Spleen (tissue), 13 donors: ENCODE measurements at regions of chr21 and their contacts with region 1.

Region 1: GRCh38 chr21:26715878-26716506 is 129.2 kb downstream of the ADAMTS1 start:
- DNase-seq: no peak
- H3K4me3 ChIP-seq: no peak overlapping the region
- H3K27ac ChIP-seq: no peak overlapping the region
- H3K4me1 ChIP-seq: peaks cover 0 to 14% (median 2%) of the 10 kb centered on the region in 6 donors
- H3K27me3 ChIP-seq: peaks cover 0 to 9% (median 0%) of the 10 kb centered on the region in 7 donors
- CTCF ChIP-seq: peak in 10 of 11 experiments; percentile 14 to 70 (median 50)
- POLR2A ChIP-seq: no peak

Region 2: GRCh38 chr21:25881525-25882376 is 834.2 kb before region 1 on chr21:
- intact Hi-C with region 1: loop called (anchors 5 kb)
- DNase-seq: peak; percentile 88
- H3K4me3 ChIP-seq: no peak overlapping the region
- H3K27ac ChIP-seq: no peak overlapping the region
- H3K4me1 ChIP-seq: no peaks in the 10 kb centered on the region
- H3K27me3 ChIP-seq: no peaks in the 10 kb centered on the region
- CTCF ChIP-seq: peak; percentile 66 to 91 (median 87)
- POLR2A ChIP-seq: no peak

Region 3: GRCh38 chr21:26769613-26770188 is 53.7 kb after region 1 on chr21:
- intact Hi-C with region 1: no loop called
- DNase-seq: no peak
- H3K4me3 ChIP-seq: no peak overlapping the region
- H3K27ac ChIP-seq: no peak overlapping the region
- H3K4me1 ChIP-seq: no peaks in the 10 kb centered on the region
- H3K27me3 ChIP-seq: no peaks in the 10 kb centered on the region
- CTCF ChIP-seq: peak in 8 of 11 experiments; percentile 7 to 47 (median 34)
- POLR2A ChIP-seq: no peak